Right lobe of liver (tissue), 6 donors: ENCODE measurements at regions of chr12 and their contacts with region 1.

Region 1: GRCh38 chr12:53065975-53066931 is 12.9 kb downstream of the SPRYD3 start:
- DNase-seq: peak in 2 of 3 donors; percentile 79
- ATAC-seq: peak; percentile 64 to 69 (median 67)
- H3K4me3 ChIP-seq: no peak overlapping the region
- H3K27ac ChIP-seq: peak overlapping the region; percentile 6 to 23 (median 20)
- H3K4me1 ChIP-seq: peaks cover 0 to 13% (median 7%) of the 10 kb centered on the region in 4 donors
- H3K27me3 ChIP-seq: no peaks in the 10 kb centered on the region
- CTCF ChIP-seq: peak; percentile 85 to 89 (median 87)
- POLR2A ChIP-seq: no peak

Region 2: GRCh38 chr12:52969828-52970569 is 96.3 kb before region 1 on chr12:
- intact Hi-C with region 1: no loop called
- DNase-seq: peak; percentile 55 to 78 (median 68)
- ATAC-seq: peak; percentile 47 to 77 (median 68)
- H3K4me3 ChIP-seq: no peak overlapping the region
- H3K27ac ChIP-seq: no peak overlapping the region
- H3K4me1 ChIP-seq: no peaks in the 10 kb centered on the region
- H3K27me3 ChIP-seq: no peaks in the 10 kb centered on the region
- CTCF ChIP-seq: no peak
- POLR2A ChIP-seq: no peak

Region 3: GRCh38 chr12:53098982-53099651 is 32.9 kb after region 1 on chr12:
- intact Hi-C with region 1: loop called (anchors 5 kb)
- DNase-seq: peak; percentile 84 to 87 (median 84)
- ATAC-seq: peak; percentile 57 to 66 (median 64)
- H3K4me3 ChIP-seq: no peak overlapping the region
- H3K27ac ChIP-seq: peak overlapping the region in 2 of 3 donors; percentile 15 to 37
- H3K4me1 ChIP-seq: peaks cover 0 to 37% (median 18%) of the 10 kb centered on the region in 4 donors
- H3K27me3 ChIP-seq: no peaks in the 10 kb centered on the region
- CTCF ChIP-seq: peak; percentile 84 to 99 (median 98)
- POLR2A ChIP-seq: no peak

Region 4: DNA sequence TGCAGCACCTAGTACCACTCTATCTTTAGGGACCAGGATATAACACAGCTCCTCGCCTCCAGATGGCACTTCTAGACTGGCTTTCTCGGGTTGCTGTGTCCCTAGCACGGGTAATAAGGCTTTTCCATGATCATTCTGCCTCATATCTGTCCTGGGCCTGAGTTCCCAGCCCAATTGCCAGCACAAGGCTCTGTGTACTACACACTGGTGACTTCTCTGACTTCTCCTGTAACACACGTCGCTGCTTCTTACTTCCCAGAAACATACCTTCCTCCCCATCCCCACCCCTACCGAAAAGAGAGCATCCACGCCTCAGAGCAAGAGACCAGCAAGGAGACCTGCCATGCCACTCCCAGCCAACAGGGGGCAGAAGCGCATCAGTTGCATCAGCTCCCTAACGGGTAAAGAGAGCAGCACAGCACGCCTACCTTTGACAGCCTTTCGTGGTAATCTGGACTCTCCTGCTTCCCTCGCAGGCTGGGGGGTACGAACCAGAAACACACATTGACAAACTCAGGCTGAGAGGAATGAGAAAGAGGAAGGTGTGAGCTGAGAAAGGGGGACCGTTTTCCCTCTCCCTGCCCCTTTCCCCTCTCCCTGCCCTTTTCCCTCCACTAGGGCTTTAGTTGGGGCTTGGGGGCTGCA is 93.1 kb after region 1 on chr12:
- intact Hi-C with region 1: loop called in 1 of 2 experiments (anchors 10 kb)
- DNase-seq: peak; percentile 81 to 89 (median 87)
- ATAC-seq: peak; percentile 82 to 94 (median 92)
- H3K4me3 ChIP-seq: no peak overlapping the region
- H3K27ac ChIP-seq: peak overlapping the region in 1 of 3 donors; percentile 60
- H3K4me1 ChIP-seq: peaks cover 0 to 56% (median 23%) of the 10 kb centered on the region in 4 donors
- H3K27me3 ChIP-seq: no peaks in the 10 kb centered on the region
- CTCF ChIP-seq: peak; percentile 94 to 99 (median 96)
- POLR2A ChIP-seq: no peak

Region 5: GRCh38 chr12:53190108-53190729 is 124.0 kb after region 1 on chr12:
- intact Hi-C with region 1: loop called (anchors 5 to 10 kb)
- DNase-seq: peak in 2 of 3 donors; percentile 62 to 70
- ATAC-seq: peak; percentile 78 to 85 (median 82)
- H3K4me3 ChIP-seq: no peak overlapping the region
- H3K27ac ChIP-seq: no peak overlapping the region
- H3K4me1 ChIP-seq: peaks cover 0 to 28% (median 7%) of the 10 kb centered on the region in 4 donors
- H3K27me3 ChIP-seq: no peaks in the 10 kb centered on the region
- CTCF ChIP-seq: peak; percentile 70 to 88 (median 74)
- POLR2A ChIP-seq: no peak